T-cell (primary cell): ENCODE measurements at regions of chr11 and their contacts with region 1.

Region 1: GRCh38 chr11:6900327-6900999 is 8.2 kb upstream of the OR2D2 start:
- DNase-seq: no peak
- ATAC-seq: no peak
- H3K4me3 ChIP-seq: no peak overlapping the region
- H3K4me3 Mint-ChIP-seq: no peak overlapping the region
- H3K27ac ChIP-seq: no peak overlapping the region
- H3K27ac Mint-ChIP-seq: no peak overlapping the region
- H3K4me1 ChIP-seq: no peaks in the 10 kb centered on the region
- H3K4me1 Mint-ChIP-seq: no peaks in the 10 kb centered on the region
- H3K27me3 ChIP-seq: no peaks in the 10 kb centered on the region
- H3K27me3 Mint-ChIP-seq: peaks cover 12 to 20% of the 10 kb centered on the region in 2 donors

Region 2: DNA sequence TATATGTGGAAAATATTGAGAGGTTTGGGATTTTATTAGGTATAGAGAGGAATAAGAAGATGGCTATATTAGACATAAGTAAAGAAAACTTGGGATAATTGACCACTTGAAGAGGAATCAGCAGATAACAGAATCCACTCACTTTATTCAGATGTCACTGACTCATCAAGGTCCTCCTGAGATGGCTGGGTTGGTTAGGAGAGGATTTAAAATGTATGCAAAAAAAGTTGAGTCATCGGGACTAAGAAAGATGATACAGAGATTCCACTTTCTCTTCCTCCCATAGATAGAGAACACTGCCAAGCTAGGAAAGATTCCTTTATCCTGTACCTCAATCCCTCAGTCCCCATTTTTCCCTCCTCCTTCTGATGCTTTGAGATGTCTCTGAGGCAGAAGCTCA is 101.1 kb before region 1 on chr11 and contains the start of gene OR6A2:
- CTCF ChIA-PET with region 1: no interaction called
- POLR2A ChIA-PET with region 1: no interaction called
- DNase-seq: no peak
- ATAC-seq: no peak
- H3K4me3 ChIP-seq: no peak within 1 kb of the TSS
- H3K4me3 Mint-ChIP-seq: no peak within 1 kb of the TSS
- H3K27ac ChIP-seq: no peak within 1 kb of the TSS
- H3K27ac Mint-ChIP-seq: no peak within 1 kb of the TSS
- H3K4me1 ChIP-seq: no peaks in the 10 kb centered on the region
- H3K4me1 Mint-ChIP-seq: no peaks in the 10 kb centered on the region
- H3K27me3 ChIP-seq: no peaks in the 10 kb centered on the region
- H3K27me3 Mint-ChIP-seq: peaks cover 0 to 5% of the 10 kb centered on the region in 2 donors
- total RNA-seq, gene OR6A2: 0.35 TPM in 1 of 5 donors, not detected in the others

Region 3: GRCh38 chr11:6889835-6890234 is 10.6 kb before region 1 on chr11:
- CTCF ChIA-PET with region 1: no interaction called
- POLR2A ChIA-PET with region 1: no interaction called
- DNase-seq: no peak
- ATAC-seq: no peak
- H3K4me3 ChIP-seq: no peak overlapping the region
- H3K4me3 Mint-ChIP-seq: no peak overlapping the region
- H3K27ac ChIP-seq: no peak overlapping the region
- H3K27ac Mint-ChIP-seq: no peak overlapping the region
- H3K4me1 ChIP-seq: no peaks in the 10 kb centered on the region
- H3K4me1 Mint-ChIP-seq: no peaks in the 10 kb centered on the region
- H3K27me3 ChIP-seq: no peaks in the 10 kb centered on the region
- H3K27me3 Mint-ChIP-seq: peaks cover 10 to 13% of the 10 kb centered on the region in 2 donors

Region 4: DNA sequence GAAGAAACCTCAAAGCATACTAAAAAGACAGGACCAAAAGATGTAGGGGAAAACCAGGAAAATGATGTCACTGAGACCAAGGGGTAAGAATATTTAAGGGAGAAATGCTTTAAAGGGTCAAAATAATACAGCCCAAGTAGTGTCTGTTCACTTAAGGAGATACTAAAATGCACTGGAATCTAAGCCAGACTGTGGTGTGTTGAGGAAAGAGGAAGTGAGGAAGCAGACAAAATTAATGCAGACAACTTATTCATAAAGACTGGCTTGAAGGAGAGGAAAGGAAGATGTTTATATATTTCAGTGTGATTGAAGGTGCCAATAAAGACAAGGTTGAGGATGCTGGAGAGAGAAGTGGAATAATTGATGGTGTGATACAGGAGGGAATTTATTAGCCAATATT is 41.5 kb after region 1 on chr11:
- CTCF ChIA-PET with region 1: interaction called in 1 of 2 experiments, 12 read pairs
- POLR2A ChIA-PET with region 1: no interaction called
- DNase-seq: no peak
- ATAC-seq: no peak
- H3K4me3 ChIP-seq: no peak overlapping the region
- H3K4me3 Mint-ChIP-seq: no peak overlapping the region
- H3K27ac ChIP-seq: no peak overlapping the region
- H3K27ac Mint-ChIP-seq: no peak overlapping the region
- H3K4me1 ChIP-seq: no peaks in the 10 kb centered on the region
- H3K4me1 Mint-ChIP-seq: no peaks in the 10 kb centered on the region
- H3K27me3 ChIP-seq: no peaks in the 10 kb centered on the region
- H3K27me3 Mint-ChIP-seq: no peaks in the 10 kb centered on the region

Region 5: GRCh38 chr11:7281079-7281478 is 380.6 kb after region 1 on chr11:
- CTCF ChIA-PET with region 1: no interaction called
- POLR2A ChIA-PET with region 1: no interaction called
- DNase-seq: no peak
- ATAC-seq: no peak
- H3K4me3 ChIP-seq: no peak overlapping the region
- H3K4me3 Mint-ChIP-seq: no peak overlapping the region
- H3K27ac ChIP-seq: no peak overlapping the region
- H3K27ac Mint-ChIP-seq: no peak overlapping the region
- H3K4me1 ChIP-seq: no peaks in the 10 kb centered on the region
- H3K4me1 Mint-ChIP-seq: no peaks in the 10 kb centered on the region
- H3K27me3 ChIP-seq: peaks cover 0 to 3% of the 10 kb centered on the region in 2 experiments
- H3K27me3 Mint-ChIP-seq: peaks cover 25 to 29% of the 10 kb centered on the region in 2 donors